ENCODE measurements at regions of chr5 and their contacts with region 1.

Region 1: GRCh38 chr5:64207978-64208377 is 42.3 kb downstream of the RNF180 start:
- DNase-seq: no peak
- ATAC-seq: no peak

Region 2: DNA sequence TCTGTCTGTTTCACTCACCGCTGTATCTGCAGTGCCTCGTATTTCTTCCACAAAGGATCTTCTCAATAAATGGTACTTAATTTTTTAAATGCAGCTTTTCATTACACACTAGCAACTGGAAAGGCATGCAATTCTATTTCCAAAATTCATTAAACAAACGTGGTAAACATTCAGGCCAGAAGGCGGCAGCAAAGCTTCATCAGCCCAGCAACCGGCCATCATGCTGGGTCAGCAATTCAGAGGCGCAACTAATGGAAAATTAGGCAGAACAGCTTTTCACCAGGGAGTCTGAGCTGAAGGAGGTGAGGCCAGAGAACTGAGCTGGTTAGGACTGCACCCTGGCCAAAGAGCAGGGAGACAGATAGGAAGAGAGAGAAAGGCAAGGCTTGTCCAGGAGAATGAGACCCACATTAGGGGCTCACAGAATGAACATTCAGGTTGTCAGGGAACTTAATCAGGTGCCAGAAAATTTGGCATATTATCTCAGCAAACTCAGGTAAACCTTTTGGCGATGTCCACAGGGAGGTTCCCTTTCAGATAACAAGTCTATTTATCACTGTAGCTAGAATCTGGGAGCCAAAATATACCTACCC is 60.0 kb before region 1 on chr5:
- intact Hi-C with region 1: loop called in 1 of 2 experiments (anchors 5 kb)
- DNase-seq: peak in 1 of 2 donors; percentile 37
- ATAC-seq: peak; percentile 25

Measured in left colon (tissue), 2 donors.